Left cardiac atrium (tissue), 4 donors: ENCODE measurements at regions of chr11 and their contacts with region 1.

Region 1: GRCh38 chr11:5643585-5643984 is 18.8 kb downstream of the TRIM34 start:
- DNase-seq: no peak
- ATAC-seq: no peak

Region 2: DNA sequence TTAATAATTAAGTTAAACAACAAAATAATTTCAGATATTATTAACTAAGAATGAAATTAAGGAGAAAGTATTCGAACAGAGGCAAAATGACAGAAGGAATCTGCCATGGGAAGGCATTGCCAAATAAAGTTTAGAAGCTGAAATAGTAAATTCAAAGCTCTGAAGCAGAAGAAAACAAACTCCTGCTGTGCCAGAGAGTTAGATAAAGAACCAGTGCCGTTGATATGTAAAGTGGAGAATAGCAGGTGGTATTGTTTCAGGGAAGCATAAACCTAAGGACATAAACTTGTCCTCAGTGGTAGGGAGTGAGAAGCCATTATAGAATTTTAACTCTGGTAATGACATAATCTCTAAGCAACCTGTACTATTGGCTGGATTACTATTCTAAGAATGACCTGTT is 386.3 kb before region 1 on chr11:
- intact Hi-C with region 1: no loop called
- DNase-seq: no peak
- ATAC-seq: no peak

Region 3: GRCh38 chr11:5597953-5598352 is 45.6 kb before region 1 on chr11:
- intact Hi-C with region 1: loop called in 1 of 2 experiments (anchors 2 kb)
- DNase-seq: no peak
- ATAC-seq: peak in 1 of 2 donors; percentile 20

Region 4: DNA sequence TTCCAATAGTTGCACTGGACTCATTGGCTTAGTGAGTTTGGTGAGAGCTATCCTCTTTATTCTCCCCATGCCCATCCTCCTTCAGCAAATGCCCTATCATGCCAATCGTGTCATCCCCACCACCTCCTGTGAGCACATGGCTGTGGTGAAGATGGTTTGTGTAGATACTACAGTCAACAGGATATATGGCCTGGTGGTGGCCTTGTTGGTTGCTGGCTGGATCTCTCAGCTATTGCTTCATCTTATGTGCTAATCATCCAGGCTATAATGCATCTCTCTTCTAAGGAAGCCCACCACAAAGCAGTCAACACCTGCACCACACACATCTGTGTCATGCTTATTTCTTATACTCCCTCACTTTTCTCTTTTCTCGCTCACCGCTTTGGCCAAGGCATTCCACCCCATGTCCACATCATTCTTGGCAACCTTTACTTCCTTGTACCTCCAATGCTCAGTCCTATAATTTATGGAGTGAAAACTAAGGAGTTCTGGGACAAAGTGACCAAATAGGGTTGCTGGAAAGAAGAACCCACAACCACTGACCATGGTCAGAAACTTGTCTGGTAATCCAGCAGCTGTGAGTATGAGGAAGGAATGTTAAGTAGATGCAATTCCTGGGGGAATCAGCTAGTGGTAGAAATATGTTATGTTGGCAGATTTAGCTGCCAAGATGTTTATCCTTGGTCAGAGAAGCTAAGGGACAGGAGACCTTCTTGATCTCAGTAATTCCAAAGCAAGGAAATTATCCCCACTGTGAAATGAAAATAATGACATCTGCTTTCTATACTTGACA is 76.3 kb after region 1 on chr11:
- intact Hi-C with region 1: no loop called
- DNase-seq: no peak
- ATAC-seq: no peak